ENCODE measurements at regions of chr9 and their contacts with region 1.

Region 1: DNA sequence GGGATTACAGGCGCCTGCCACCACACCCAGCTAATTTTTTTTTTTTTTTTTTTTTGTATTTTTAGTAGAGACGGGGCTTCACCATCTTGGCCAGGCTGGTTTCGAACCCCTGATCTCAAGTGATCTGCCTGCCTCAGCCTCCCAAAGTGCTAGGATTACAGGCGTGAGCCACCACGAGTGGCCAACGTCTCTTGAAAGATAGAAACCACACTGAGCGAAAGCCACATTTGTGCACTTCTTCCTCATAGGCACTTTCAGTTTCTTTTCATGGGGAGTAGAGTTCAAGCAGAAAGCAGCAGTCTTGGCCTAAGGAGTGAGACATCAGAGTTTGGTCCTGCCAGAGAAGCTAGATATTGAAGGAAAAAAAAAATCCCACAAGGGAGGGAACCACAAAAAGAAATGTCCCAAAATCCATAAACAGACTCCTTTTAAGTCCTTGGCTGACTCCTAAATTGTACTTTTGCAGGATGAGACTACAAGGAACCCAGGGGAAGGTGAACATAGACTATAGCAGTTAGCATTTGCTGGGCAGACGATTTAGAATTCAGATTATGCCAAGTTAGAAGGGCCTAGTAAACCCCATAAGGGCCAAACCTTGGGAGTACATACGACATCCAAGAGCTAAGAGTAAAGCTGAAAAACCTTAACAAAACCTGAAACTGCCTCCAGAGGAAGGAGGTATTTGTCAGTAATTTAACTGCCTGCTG is 43.9 kb upstream of the GLIPR2 start:
- DNase-seq: no peak
- ATAC-seq: peak in 1 of 2 donors; percentile 44

Region 2: DNA sequence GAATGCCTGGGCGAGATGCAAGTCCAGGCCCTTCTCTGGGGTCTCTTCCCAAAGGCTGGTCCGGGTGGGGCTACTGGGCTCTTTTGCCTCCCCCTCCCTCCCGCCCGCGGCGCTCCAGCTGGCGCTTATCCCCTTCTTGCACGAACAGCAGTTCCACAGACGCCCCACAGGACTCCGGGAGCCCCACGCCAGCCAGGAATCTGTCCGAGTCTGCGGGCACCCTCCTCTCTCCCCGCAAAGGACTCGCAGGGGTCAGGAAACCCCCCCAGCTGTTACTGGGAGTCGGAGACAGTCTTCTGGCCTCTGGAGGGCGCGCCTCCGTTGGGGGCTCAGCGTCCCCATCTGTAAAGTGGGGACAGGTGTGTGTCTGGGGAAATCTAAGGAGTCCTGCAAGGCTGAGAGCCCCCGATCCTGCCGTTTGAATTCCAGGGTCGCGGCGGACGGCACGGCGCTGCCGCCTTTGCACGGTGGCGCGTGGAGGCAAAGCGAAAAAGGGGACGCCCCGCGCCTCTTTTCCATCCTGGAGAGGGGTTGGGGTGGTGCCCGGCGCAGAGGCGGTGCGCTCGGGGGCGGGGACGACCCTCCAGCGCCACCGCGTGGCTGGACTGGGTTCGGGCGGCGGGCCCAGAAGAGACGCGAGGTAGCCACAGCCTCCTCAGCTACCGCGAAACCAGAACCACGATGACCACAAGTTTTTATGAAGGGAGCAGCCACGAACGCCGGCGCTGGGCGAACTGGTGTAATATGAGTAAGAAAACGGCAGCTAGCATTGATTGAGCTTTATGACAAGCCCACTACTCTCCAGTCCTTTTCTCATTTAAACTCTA is 73.7 kb after region 1 on chr9:
- intact Hi-C with region 1: no loop called
- DNase-seq: peak; percentile 84
- ATAC-seq: peak; percentile 91 to 94

Region 3: GRCh38 chr9:36306471-36307306 is 214.0 kb after region 1 on chr9:
- intact Hi-C with region 1: loop called in 1 of 2 experiments (anchors 10 kb)
- DNase-seq: no peak
- ATAC-seq: no peak

Measured in left cardiac atrium (tissue), 4 donors.